ENCODE measurements at regions of chr1 and their contacts with region 1.

Region 1: GRCh38 chr1:246971090-246971721 is 36.7 kb downstream of the ZNF695 start:
- DNase-seq: peak; percentile 42
- H3K4me3 ChIP-seq: no peak overlapping the region
- H3K27ac ChIP-seq: no peak overlapping the region
- H3K4me1 ChIP-seq: no peaks in the 10 kb centered on the region
- H3K27me3 ChIP-seq: no peaks in the 10 kb centered on the region
- CTCF ChIP-seq: peak; percentile 57 to 73
- POLR2A ChIP-seq: no peak

Region 2: DNA sequence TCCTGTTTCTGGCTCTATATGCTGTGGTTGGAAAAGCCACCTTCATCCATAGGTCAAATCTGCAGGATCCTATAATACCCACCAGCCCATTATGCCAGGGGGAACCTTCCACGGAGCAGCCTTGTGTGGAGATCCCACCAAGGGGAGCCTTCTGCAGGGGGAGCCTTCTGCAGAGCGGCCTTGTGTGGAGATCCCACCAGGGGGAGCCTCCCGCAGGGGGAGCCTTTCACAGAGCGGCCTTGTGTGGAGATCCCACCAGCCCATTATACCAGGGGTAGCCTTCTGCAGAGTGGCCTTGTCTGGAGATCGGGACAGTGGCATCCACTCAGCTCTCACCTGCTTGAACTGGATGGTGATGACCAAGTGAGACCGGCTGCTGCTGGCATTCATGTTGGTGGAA is 161.7 kb before region 1 on chr1:
- CTCF ChIA-PET with region 1: interaction called, 5 read pairs
- POLR2A ChIA-PET with region 1: no interaction called
- dilution Hi-C with region 1: no loop called
- intact Hi-C with region 1: loop called (anchors 1 kb)
- DNase-seq: no peak
- H3K4me3 ChIP-seq: no peak overlapping the region
- H3K27ac ChIP-seq: no peak overlapping the region
- H3K4me1 ChIP-seq: no peaks in the 10 kb centered on the region
- H3K27me3 ChIP-seq: peaks cover 2% of the 10 kb centered on the region in 2 experiments
- CTCF ChIP-seq: peak in 1 of 2 donors; percentile 16
- POLR2A ChIP-seq: no peak

Region 3: GRCh38 chr1:246837418-246838117 is 133.6 kb before region 1 on chr1:
- CTCF ChIA-PET with region 1: no interaction called
- POLR2A ChIA-PET with region 1: no interaction called
- dilution Hi-C with region 1: no loop called
- intact Hi-C with region 1: loop called (anchors 10 kb)
- DNase-seq: no peak
- H3K4me3 ChIP-seq: no peak overlapping the region
- H3K27ac ChIP-seq: no peak overlapping the region
- H3K4me1 ChIP-seq: no peaks in the 10 kb centered on the region
- H3K27me3 ChIP-seq: no peaks in the 10 kb centered on the region
- CTCF ChIP-seq: no peak
- POLR2A ChIP-seq: no peak

Region 4: DNA sequence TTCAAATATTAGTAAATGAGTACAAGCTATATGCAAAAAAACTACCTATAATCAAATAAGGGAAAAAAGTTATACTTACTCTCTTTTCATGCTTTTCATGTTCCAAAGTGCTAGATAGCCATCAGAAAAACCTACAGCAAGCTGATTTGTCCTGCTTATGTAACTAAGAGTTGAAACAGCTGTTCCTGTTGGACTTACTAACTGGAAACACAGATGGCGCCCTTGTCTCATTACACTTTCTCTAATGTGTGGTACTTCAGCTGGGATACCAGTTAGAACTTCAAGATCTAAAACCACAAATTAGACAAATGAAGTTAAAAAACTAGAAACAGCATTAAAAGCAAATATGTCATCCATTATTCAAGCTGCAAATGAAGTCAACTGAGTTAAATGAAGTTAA is 63.7 kb before region 1 on chr1:
- CTCF ChIA-PET with region 1: interaction called, 27 read pairs
- POLR2A ChIA-PET with region 1: no interaction called
- dilution Hi-C with region 1: no loop called
- intact Hi-C with region 1: loop called (anchors 1 kb)
- DNase-seq: peak; percentile 63
- H3K4me3 ChIP-seq: no peak overlapping the region
- H3K27ac ChIP-seq: no peak overlapping the region
- H3K4me1 ChIP-seq: no peaks in the 10 kb centered on the region
- H3K27me3 ChIP-seq: no peaks in the 10 kb centered on the region
- CTCF ChIP-seq: peak; percentile 15 to 33
- POLR2A ChIP-seq: no peak

Region 5: DNA sequence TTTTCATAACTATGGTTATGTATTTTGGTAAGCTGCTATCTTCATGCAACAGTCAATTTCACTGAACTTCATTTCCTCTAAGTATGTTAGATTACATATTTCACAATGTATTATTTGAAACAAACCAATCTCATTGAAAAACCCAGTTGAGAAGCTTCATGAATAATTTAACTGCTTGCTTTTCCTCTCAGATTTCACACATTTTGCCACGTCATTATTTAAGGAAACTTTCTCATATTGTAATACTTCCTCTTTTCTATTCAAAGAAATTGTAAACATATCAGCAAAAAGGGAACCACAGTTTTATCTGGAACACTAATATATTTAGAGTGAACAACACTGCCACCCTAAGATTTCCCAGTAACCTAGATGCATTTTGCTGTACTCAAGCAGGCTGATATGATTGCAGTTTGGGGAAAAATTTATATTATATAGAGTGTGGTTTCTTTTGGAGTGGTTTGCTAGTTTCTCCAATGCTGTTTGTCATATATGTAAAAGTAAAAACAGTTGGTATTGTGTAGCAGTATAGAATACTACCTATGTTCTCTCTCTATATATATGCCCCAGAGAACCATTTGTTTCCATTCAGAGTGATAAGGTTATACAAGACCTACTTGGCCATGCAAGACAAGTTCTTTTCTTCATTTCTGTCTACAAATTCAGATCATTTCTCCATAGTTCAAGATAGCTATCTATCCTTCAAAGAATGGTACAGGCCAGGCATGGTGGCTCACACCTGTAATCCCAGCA is 11.1 kb before region 1 on chr1:
- CTCF ChIA-PET with region 1: interaction called, 16 read pairs
- POLR2A ChIA-PET with region 1: interaction called, 3 read pairs
- dilution Hi-C with region 1: no loop called
- intact Hi-C with region 1: no loop called
- DNase-seq: peak; percentile 75
- H3K4me3 ChIP-seq: peak overlapping the region in 1 of 3 experiments; percentile 18
- H3K27ac ChIP-seq: peak overlapping the region; percentile 52
- H3K4me1 ChIP-seq: peaks cover 7% of the 10 kb centered on the region
- H3K27me3 ChIP-seq: no peaks in the 10 kb centered on the region
- CTCF ChIP-seq: no peak
- POLR2A ChIP-seq: no peak

Region 6: GRCh38 chr1:246987083-246987690 is 16.0 kb after region 1 on chr1:
- CTCF ChIA-PET with region 1: no interaction called
- POLR2A ChIA-PET with region 1: no interaction called
- dilution Hi-C with region 1: no loop called
- intact Hi-C with region 1: no loop called
- DNase-seq: no peak
- H3K4me3 ChIP-seq: no peak overlapping the region
- H3K27ac ChIP-seq: no peak overlapping the region
- H3K4me1 ChIP-seq: no peaks in the 10 kb centered on the region
- H3K27me3 ChIP-seq: no peaks in the 10 kb centered on the region
- CTCF ChIP-seq: no peak
- POLR2A ChIP-seq: no peak

Region 7: DNA sequence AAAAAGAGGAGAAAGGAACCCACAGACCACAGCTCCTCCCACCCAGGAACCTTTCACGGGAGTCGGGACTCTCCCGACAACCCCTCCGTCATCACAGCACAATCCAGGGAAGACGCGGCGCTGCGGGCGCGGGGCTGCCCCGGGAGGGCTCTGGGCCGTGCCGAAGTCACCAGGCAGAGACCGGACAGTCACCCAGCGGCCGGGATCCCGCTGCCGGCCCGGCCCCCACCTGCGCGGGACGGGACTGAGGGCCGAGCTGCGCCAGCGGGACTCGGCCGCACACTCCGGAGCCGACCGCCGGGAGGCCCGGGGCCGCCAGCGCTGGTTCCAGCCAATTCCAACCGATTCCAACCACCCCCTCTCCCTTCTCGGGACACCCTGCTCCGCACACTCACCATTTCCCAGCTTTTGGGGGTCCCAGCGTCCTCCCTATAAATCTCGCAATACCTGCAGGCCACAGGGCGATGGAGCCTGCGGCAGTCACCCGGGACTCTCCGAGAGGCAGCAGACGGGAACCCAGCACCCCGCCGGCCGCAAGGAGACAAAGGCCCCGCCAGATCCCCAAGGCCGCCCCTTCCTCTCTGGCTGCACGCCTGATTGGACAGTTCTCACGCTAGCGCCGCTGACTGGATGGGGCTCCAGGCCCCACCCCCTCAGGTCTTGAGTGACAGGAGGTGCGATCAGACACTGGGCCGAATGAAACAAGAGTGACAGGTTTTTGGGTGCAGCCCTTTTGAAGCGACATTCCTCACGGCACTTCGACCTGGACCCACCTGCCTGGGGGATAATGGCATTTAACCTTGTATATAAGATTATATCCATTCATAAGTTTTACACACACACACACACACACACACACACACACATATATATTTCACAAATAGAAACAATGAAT is 36.6 kb after region 1 on chr1 and contains the start of gene ZNF695:
- CTCF ChIA-PET with region 1: no interaction called
- POLR2A ChIA-PET with region 1: no interaction called
- dilution Hi-C with region 1: no loop called
- intact Hi-C with region 1: no loop called
- DNase-seq: peak; percentile 96
- H3K4me3 ChIP-seq: peak within 1 kb of the TSS; percentile 57 to 79 (median 73)
- H3K27ac ChIP-seq: peak within 1 kb of the TSS; percentile 25
- H3K4me1 ChIP-seq: no peaks in the 10 kb centered on the region
- H3K27me3 ChIP-seq: no peaks in the 10 kb centered on the region
- CTCF ChIP-seq: no peak
- POLR2A ChIP-seq: peak; percentile 25
- total RNA-seq, gene ZNF695: 4.8 and 5.5 TPM in 2 replicates